ENCODE measurements at regions of chr15 and their contacts with region 1.

Region 1: GRCh38 chr15:35444557-35445204 is 101.3 kb downstream of the DPH6 start:
- DNase-seq: no peak
- ATAC-seq: no peak
- H3K4me3 ChIP-seq: no peak overlapping the region
- H3K27ac ChIP-seq: no peak overlapping the region
- H3K4me1 ChIP-seq: no peaks in the 10 kb centered on the region
- H3K27me3 ChIP-seq: no peaks in the 10 kb centered on the region
- CTCF ChIP-seq: peak; percentile 75

Region 2: DNA sequence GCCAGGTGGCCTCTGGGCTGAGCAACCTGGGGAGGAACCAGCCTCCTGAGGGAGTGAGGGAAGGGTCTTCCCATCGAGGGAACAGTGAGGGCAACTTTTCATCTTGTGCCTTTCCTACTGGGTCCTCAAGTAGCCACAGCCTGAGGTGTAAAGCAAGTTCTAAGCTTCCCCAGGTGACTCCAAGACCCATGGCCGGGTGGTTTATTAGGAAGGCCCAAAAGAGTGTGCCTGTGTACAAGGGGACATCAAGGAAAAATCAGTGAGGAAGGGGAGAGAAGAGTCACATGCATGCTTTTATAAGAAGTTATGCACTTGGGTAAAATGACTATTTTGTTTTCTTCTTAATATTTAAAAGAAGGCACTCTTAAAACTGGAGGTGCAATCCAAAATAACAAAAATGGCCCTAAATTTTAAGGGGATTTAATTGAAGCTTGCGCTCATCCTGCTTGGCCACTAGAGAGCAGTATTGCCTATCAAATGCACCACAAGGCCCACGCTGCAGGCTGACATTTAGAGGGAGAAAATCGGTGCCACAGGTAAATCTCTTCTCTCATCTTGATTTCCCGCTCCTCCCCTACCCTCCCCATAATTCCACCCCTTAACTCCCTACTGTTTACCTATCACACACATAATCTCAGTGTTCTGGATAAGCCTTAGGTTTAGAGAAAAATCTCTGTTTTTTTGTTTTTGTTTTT is 366.3 kb before region 1 on chr15:
- intact Hi-C with region 1: loop called in 1 of 2 experiments (anchors 5 kb)
- DNase-seq: no peak
- ATAC-seq: peak in 3 of 4 donors; percentile 42 to 59 (median 56)
- H3K4me3 ChIP-seq: no peak overlapping the region
- H3K27ac ChIP-seq: no peak overlapping the region
- H3K4me1 ChIP-seq: no peaks in the 10 kb centered on the region
- H3K27me3 ChIP-seq: no peaks in the 10 kb centered on the region
- CTCF ChIP-seq: peak; percentile 69

Region 3: GRCh38 chr15:35290301-35290721 is 154.4 kb before region 1 on chr15:
- intact Hi-C with region 1: loop called (anchors 2 kb)
- DNase-seq: no peak
- ATAC-seq: no peak
- H3K4me3 ChIP-seq: no peak overlapping the region
- H3K27ac ChIP-seq: no peak overlapping the region
- H3K4me1 ChIP-seq: peaks cover 7% of the 10 kb centered on the region
- H3K27me3 ChIP-seq: no peaks in the 10 kb centered on the region
- CTCF ChIP-seq: no peak

Region 4: DNA sequence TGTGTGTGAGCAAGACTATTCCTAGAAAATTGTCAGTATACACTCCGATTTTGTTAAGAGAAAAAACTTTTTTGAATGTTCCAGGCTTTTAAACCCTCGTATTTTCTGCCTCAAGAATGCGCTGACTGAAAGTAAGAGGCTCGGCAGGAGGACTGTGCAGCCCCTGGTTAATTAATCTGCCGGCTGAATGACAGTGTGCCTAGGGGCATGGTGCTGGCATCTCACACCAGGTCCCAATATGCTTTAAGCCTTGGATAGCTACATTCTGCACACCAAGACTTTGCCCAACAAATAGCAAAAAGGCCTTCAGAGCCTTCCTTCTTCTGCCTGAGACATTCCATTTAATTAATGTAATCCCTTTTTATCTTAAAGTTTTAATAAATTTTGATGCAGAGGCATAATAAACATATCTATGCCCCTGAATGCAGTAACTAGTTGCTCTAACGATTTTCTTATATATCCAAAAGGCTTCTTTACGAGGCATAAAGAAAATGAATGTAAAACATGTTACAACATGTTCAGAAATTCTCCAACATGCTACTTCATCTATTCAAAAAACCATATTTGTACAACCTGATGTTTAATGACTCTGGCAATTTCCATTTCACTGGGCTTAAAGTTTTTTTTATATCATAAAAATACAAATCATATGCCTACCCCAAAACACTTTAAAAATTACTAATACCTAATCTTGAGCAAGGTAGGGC is 63.4 kb after region 1 on chr15:
- intact Hi-C with region 1: no loop called
- DNase-seq: no peak
- ATAC-seq: no peak
- H3K4me3 ChIP-seq: no peak overlapping the region
- H3K27ac ChIP-seq: no peak overlapping the region
- H3K4me1 ChIP-seq: peaks cover 9% of the 10 kb centered on the region
- H3K27me3 ChIP-seq: no peaks in the 10 kb centered on the region
- CTCF ChIP-seq: no peak

Region 5: DNA sequence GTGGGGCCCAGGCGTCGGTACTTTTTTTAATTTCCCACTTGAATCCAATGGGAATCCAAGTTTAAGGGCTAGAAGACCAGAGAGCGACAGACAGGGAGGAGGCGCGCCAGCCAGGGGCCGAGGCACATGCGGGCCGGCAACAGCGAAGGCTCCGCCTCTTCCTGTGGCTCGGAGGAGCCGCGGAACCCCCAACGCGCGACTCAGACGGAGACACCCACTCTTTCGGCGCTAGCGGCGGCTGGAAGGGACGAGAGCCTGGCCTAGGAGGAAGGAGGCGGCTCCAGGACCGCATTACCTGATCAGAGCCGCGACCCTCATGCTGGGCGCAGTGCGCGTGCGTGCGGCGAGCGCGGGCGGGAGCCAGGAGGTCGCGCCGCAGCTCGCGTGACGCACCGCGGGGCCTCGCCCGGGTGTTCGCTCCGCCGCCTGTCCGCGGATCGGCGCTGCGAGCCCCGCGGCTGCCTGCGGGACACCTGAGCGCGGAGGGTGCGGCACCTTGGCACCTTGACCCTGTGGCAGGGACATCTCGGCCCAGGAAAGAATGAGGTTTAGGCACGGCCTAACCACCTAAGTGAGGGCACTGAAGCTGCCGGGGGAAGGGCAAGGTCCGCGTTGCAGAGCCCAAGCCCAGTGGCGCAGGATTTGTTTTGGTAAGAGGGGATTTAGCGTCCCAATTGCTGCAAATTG is 101.3 kb after region 1 on chr15 and contains the start of gene DPH6:
- intact Hi-C with region 1: no loop called
- DNase-seq: peak; percentile 85 to 92
- ATAC-seq: peak; percentile 94 to 96 (median 94)
- H3K4me3 ChIP-seq: peak within 1 kb of the TSS; percentile 77
- H3K27ac ChIP-seq: peak within 1 kb of the TSS; percentile 96
- H3K4me1 ChIP-seq: peaks cover 15% of the 10 kb centered on the region
- H3K27me3 ChIP-seq: no peaks in the 10 kb centered on the region
- CTCF ChIP-seq: no peak
- total RNA-seq, gene DPH6: 18.0 to 26.0 (median 20.6) TPM